BJ (cell line): ENCODE measurements at regions of chr19 and their contacts with region 1.

Region 1: DNA sequence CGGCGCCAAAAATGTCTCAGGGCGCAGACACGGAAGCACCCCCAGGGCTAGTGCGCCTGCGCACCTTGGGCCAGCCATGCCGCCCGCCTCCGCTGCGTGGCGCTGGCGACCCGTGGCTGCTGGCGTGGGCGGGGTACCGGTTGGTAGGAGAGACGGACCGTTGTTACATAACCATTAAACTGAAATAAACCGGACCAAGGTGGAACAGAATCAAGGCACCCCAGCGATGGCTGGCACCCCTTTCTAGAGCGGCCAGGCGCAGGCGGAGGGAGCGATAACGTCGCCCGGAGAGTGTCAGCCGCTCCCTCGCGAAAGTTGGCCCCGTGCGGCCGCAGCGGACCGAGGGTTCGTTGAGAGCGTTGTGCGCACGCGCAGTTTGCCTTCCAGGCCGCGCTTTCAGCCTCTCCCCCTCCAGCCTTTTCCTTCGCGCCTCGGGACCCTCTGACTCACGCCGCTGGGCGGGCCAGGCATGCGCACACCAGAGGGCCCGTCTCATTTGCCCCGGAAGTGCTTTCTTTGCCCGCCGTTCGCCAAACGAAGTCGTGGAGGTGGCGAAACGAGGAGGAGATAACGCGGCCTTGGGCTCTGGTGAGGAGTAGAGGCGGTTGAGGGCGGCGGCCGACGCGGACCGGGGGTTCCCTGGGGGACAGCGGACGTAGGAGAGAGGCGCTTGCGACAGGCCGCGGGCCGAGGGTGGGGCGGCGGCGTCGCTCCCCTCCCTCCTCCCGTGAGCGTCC is at the starts of genes PLEKHJ1 and SF3A2:
- DNase-seq: peak; percentile 85
- H3K4me3 ChIP-seq: peak within 1 kb of the TSS; percentile 83
- H3K27me3 ChIP-seq: no peaks in the 10 kb centered on the region
- CTCF ChIP-seq: peak; percentile 95
- polyA plus RNA-seq, gene PLEKHJ1: 46.2 and 65.8 TPM in 2 replicates
- polyA plus RNA-seq, gene SF3A2: 8.9 and 12.2 TPM in 2 replicates

Region 2: GRCh38 chr19:2154587-2155075 is 81.9 kb before region 1 on chr19:
- CTCF ChIA-PET with region 1: interaction called, 14 read pairs
- POLR2A ChIA-PET with region 1: interaction called, 6 read pairs
- DNase-seq: peak; percentile 87
- H3K4me3 ChIP-seq: no peak overlapping the region
- H3K27me3 ChIP-seq: no peaks in the 10 kb centered on the region
- CTCF ChIP-seq: no peak

Region 3: DNA sequence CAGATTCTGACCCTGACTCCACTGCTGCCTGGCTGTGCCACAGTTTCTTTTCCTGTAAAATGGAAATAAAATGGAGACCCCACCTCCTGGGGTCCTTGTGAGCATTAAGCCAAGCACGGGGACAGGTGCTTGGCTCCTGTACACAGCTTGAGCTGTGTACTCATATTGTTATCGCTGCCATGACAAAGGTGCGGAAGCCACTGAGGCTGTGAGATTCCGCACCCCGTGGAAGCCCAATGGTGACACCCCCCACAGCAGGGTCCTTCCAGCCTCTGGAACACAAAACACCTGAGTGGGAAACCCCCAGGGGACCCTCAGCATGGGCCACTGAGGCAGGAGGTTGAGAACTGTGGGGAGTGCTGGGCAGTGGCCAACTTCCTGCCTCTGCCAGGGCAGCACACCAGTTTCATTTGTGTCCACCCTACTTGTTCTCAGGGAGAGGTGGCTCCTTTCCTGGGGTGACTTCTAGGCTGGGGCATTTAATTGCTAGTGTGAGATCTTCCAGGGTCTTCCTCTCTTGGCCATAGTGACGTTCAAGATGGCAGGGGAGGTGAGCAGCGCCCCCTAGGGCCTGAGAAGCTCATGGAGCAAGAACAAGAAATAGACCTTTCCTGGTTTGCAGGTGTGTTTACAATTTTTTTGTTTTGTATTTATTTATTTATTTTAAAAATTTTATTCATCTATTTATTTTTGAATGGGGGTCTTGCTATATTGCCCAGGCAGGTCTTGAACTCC is 25.1 kb after region 1 on chr19:
- CTCF ChIA-PET with region 1: interaction called, 13 read pairs
- POLR2A ChIA-PET with region 1: no interaction called
- DNase-seq: no peak
- H3K4me3 ChIP-seq: no peak overlapping the region
- H3K27me3 ChIP-seq: no peaks in the 10 kb centered on the region
- CTCF ChIP-seq: peak; percentile 68